HepG2 (cell line): ENCODE measurements at regions of chr20 and their contacts with region 1.

Region 1: GRCh38 chr20:56247948-56248782 is at the start of gene MC3R:
- DNase-seq: peak; percentile 68
- ATAC-seq: peak; percentile 97
- H3K4me3 ChIP-seq: no peak within 1 kb of the TSS
- H3K27ac ChIP-seq: no peak within 1 kb of the TSS
- H3K4me1 ChIP-seq: no peaks in the 10 kb centered on the region
- H3K27me3 ChIP-seq: peaks cover 0 to 3% of the 10 kb centered on the region in 2 experiments; a peak in 1 of 5 replicates
- CTCF ChIP-seq: peak; percentile 94
- EP300 ChIP-seq: no peak
- POLR2A ChIP-seq: no peak
- RAD21 ChIP-seq: peak; percentile 74
- total RNA-seq, gene MC3R: not detected in 2 replicates

Region 2: DNA sequence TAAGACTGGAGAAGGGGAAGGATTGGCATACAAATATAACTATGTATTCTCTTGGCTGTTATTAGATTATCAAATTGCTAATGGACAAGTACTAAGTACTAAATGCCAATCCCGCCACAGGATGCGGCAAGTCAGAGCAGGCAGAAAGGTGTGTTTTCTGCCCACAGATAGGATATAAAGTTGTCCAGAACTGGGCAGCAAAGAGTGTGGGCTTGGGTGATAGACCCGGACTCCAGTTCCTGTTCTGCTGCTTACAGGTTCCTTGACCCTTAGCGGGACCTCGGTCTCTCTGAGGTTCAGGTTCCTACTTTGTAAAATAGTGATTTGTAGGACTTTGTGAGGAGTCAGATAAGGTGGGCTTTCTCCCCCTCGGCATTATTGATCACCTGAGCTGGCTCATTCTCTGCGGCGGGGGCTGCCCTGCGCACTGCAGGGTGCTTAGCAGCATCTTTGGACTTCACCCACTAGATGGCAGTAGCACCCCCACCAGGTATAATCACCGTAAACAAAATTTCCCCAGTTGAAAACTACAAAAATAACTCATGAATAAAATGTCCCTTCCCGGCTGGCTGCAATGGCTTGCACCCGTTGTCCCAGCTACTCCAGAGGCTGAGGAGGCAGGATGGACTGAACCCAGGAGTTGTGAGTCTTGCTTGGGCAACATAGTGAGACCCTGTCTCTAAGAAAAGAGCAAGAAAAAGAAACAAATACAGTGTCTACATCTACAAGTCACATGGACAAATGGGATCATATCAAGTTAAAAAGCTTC is 1579.7 kb before region 1 on chr20:
- CTCF ChIA-PET with region 1: no interaction called
- POLR2A ChIA-PET with region 1: no interaction called
- in situ Hi-C with region 1: no loop called
- intact Hi-C with region 1: loop called (anchors 5 kb)
- DNase-seq: peak; percentile 41
- ATAC-seq: peak; percentile 99
- H3K4me3 ChIP-seq: no peak overlapping the region
- H3K27ac ChIP-seq: no peak overlapping the region
- H3K4me1 ChIP-seq: peaks cover 5% of the 10 kb centered on the region; the same call in 1 of the 2 replicates
- H3K27me3 ChIP-seq: no peaks in the 10 kb centered on the region
- CTCF ChIP-seq: peak; percentile 79
- EP300 ChIP-seq: no peak
- POLR2A ChIP-seq: no peak
- RAD21 ChIP-seq: no peak; the same call in 1 of the 2 replicates

Region 3: GRCh38 chr20:54980103-54980960 is 1267.8 kb before region 1 on chr20:
- CTCF ChIA-PET with region 1: no interaction called
- POLR2A ChIA-PET with region 1: no interaction called
- in situ Hi-C with region 1: no loop called
- intact Hi-C with region 1: loop called (anchors 2 kb)
- DNase-seq: no peak
- ATAC-seq: peak; percentile 67
- H3K4me3 ChIP-seq: no peak overlapping the region
- H3K27ac ChIP-seq: no peak overlapping the region
- H3K4me1 ChIP-seq: no peaks in the 10 kb centered on the region
- H3K27me3 ChIP-seq: no peaks in the 10 kb centered on the region
- CTCF ChIP-seq: peak; percentile 44; the same call in 1 of the 2 replicates
- EP300 ChIP-seq: no peak
- POLR2A ChIP-seq: no peak
- RAD21 ChIP-seq: no peak

Region 4: DNA sequence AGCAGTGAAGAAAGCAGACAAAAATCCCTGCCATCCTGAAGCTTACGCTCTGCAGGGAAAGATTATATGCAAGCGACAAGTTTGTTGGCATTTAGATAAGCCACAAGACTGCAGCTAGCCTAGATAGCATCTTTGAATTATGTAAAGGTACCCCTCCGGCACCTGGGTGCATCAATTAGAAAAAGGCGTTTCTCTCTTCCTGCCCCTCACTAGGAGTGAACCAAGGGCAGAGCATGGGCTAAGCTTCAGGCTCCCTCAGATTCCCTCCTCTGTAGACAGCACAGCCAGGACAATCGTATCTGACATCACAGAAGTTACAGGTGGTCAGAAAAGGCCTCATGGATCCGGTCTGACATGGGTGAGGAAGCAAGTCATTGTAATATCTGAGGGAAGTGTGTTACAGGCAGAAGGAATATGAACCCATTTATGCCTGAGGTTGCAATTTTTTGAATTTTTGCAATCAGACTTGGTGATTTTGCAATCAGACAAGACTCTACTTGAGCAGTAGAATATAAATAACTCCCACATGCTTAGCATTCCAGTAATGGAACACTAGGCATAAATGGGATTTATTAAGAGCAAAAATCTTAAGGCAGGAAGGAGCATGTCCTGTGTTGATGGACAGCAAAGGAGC is 295.1 kb before region 1 on chr20:
- CTCF ChIA-PET with region 1: no interaction called
- POLR2A ChIA-PET with region 1: no interaction called
- in situ Hi-C with region 1: no loop called
- intact Hi-C with region 1: no loop called
- DNase-seq: no peak
- ATAC-seq: no peak
- H3K4me3 ChIP-seq: no peak overlapping the region
- H3K27ac ChIP-seq: no peak overlapping the region
- H3K4me1 ChIP-seq: no peaks in the 10 kb centered on the region
- H3K27me3 ChIP-seq: no peaks in the 10 kb centered on the region
- CTCF ChIP-seq: no peak
- EP300 ChIP-seq: no peak
- POLR2A ChIP-seq: no peak
- RAD21 ChIP-seq: no peak

Region 5: DNA sequence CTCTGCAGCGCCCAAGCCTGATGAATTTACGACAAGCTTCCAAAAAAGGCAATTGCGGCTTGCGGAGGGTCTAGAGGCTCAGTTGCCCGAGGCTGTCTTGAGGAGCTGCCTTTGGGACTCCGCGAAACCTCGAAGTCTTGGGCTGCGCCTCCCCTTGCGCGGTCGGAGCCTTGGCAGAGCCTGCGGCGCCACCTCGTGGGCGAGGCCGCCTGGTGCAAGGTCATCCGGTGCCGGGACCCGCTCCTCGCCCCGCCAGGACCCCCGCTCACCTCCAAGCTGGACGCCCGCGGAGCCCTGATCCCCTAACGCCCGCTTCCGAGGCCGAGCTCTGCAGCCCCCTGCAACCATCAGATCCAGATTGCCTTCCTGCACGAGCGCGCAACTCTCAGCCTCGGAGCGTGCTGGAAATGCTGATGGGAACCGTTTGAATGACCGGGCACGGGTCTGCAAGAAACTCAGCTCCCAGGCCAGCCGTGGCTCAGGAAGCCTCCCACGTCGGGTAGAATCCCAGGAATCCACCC is 95.8 kb after region 1 on chr20:
- CTCF ChIA-PET with region 1: interaction called, 13 read pairs
- POLR2A ChIA-PET with region 1: no interaction called
- in situ Hi-C with region 1: no loop called
- intact Hi-C with region 1: loop called (anchors 2 kb)
- DNase-seq: no peak
- ATAC-seq: peak; percentile 92
- H3K4me3 ChIP-seq: peak overlapping the region in 1 of 3 experiments; percentile 21; a peak in 1 of 6 replicates
- H3K27ac ChIP-seq: no peak overlapping the region
- H3K4me1 ChIP-seq: peaks cover 12% of the 10 kb centered on the region
- H3K27me3 ChIP-seq: peaks cover 0 to 7% of the 10 kb centered on the region in 2 experiments; a peak in 1 of 5 replicates
- CTCF ChIP-seq: peak; percentile 86
- EP300 ChIP-seq: no peak
- POLR2A ChIP-seq: no peak
- RAD21 ChIP-seq: peak; percentile 77

Region 6: DNA sequence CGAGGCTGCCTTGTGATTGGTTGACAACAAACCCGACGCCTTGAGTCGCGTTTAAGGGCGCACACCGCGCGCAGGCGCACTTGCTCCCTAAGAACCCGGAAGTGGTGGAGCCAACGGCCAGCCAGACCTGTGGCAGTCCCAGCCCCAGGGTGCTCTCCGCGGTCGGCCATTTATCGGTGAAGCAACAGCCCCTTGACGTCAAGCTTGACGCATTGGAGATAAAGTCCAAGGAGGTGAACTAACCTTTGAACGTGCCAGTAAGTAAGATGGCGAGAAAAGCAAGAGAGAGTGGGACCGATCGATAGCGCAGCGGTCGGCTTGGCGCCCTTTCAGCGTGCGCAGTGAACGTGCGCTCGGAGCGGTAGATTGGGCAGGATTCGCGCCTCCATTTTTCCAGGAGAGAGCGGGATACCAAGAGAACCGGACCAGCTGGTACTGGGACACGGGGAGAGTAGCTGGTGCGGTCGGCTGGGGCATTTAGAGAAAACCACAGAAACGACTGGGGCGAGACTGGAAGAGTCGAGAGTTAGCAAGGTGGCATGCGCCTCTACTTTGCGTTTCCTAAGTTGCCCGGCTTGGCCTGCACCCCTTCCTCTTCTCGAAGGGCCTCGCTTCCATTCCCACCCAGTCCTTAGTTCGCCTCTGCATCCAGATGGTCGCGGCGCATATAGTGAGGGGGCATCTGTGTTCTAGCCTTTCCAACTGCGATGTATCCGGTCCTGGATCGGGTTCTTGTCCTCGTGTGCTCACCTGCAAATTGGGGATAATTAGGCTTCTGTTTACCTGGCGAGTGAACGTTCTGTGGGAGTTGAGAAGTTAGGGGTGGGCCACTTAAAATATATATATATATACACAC is 144.3 kb after region 1 on chr20 and contains the start of gene CSTF1:
- CTCF ChIA-PET with region 1: no interaction called
- POLR2A ChIA-PET with region 1: no interaction called
- in situ Hi-C with region 1: no loop called
- intact Hi-C with region 1: loop called (anchors 1 kb)
- DNase-seq: peak; percentile 100
- ATAC-seq: peak; percentile 95
- H3K4me3 ChIP-seq: peak within 1 kb of the TSS; percentile 92 to 94 (median 93)
- H3K27ac ChIP-seq: peak within 1 kb of the TSS; percentile 88
- H3K4me1 ChIP-seq: peaks cover 50% of the 10 kb centered on the region
- H3K27me3 ChIP-seq: peaks cover 0 to 4% of the 10 kb centered on the region in 2 experiments; a peak in 1 of 5 replicates
- CTCF ChIP-seq: peak; percentile 39; the same call in 1 of the 2 replicates
- EP300 ChIP-seq: peak; percentile 78 to 91; a peak in 3 of 4 replicates
- POLR2A ChIP-seq: peak; percentile 60 to 85
- RAD21 ChIP-seq: peak; percentile 59
- total RNA-seq, gene CSTF1: 70.9 and 105 TPM in 2 replicates